ENCODE measurements at regions of chr1 and their contacts with region 1.

Region 1: DNA sequence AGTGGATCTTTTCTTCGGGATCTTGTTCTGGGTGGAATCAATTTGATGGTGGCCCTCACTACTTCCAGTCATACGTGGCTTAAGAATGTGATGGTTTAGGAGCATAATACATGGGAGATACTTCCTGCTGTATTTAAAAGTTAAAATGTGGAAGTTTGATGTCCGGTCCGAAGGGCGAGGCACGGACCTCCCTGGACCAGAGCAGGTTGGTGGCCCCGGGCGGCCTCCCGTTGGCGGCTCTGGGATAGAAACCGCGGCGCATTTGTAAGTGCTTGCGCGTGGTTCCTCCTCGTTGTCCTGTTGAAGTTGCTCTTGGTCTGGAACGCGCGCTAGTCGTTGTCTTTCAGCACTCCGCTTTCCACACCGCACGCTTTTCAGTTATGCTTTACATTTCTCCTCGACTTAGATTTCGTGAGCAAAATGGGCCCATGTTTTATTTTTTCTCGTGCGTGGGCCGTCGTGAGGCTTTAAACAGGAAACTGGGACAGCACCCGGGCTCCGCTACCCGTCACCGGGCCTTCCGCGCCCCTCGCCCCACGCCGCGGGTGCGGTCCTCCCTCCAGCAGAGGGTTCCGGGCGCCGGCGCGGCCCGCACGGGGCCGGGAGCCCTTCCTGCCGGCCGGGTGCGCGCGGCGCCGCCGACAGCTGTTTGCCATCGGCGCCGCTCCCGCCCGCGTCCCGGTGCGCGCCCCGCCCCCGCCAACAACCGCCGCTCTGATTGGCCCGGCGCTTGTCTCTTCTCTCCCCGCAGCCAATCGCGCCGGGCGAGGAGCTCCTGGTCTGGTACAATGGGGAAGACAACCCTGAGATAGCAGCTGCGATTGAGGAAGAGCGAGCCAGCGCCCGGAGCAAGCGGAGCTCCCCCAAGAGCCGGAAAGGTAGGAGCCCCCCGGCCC is 48.9 kb downstream of the PRDM2 start:
- DNase-seq: peak; percentile 99

Region 2: GRCh38 chr1:13699936-13700520 is 48.8 kb before region 1 on chr1 and contains the start of gene PRDM2:
- intact Hi-C with region 1: loop called (anchors 2 kb)
- DNase-seq: peak; percentile 78
- total RNA-seq, gene PRDM2: 44.5 TPM

Region 3: DNA sequence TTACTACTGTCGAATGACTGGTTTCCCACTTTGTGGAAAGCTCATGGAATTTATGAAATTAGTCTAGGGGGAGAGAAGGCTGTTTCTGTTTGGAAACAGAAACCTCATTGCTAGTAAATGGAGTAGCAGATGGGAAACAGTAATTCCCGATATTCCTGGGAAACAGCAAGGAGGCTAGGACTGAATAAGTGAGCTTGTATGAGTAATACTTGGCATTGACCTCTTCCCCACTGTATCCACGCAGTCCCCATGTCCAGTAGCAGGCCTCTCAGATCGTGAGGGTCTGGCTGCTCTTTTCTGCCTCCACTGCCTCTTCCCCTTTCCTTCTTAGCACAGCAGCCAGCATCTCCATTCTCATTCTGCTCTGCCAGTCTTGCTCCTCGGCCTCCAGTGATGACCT is 26.6 kb after region 1 on chr1:
- intact Hi-C with region 1: no loop called
- DNase-seq: no peak

Region 4: GRCh38 chr1:13792419-13792818 is 43.6 kb after region 1 on chr1:
- intact Hi-C with region 1: loop called (anchors 5 kb)
- DNase-seq: no peak

Measured in cardiac septum (tissue), 1 donor.